Mammary epithelial cell (primary cell): ENCODE measurements at regions of chr15 and their contacts with region 1.

Region 1: GRCh38 chr15:99059010-99059981 is 45.6 kb upstream of the SYNM start:
- DNase-seq: peak; percentile 30
- H3K4me3 ChIP-seq: peak overlapping the region; percentile 41 to 67 (median 64)
- H3K27ac ChIP-seq: peak overlapping the region; percentile 13
- H3K4me1 ChIP-seq: peaks cover 7% of the 10 kb centered on the region
- H3K27me3 ChIP-seq: no peaks in the 10 kb centered on the region
- CTCF ChIP-seq: peak; percentile 54 to 57

Region 2: DNA sequence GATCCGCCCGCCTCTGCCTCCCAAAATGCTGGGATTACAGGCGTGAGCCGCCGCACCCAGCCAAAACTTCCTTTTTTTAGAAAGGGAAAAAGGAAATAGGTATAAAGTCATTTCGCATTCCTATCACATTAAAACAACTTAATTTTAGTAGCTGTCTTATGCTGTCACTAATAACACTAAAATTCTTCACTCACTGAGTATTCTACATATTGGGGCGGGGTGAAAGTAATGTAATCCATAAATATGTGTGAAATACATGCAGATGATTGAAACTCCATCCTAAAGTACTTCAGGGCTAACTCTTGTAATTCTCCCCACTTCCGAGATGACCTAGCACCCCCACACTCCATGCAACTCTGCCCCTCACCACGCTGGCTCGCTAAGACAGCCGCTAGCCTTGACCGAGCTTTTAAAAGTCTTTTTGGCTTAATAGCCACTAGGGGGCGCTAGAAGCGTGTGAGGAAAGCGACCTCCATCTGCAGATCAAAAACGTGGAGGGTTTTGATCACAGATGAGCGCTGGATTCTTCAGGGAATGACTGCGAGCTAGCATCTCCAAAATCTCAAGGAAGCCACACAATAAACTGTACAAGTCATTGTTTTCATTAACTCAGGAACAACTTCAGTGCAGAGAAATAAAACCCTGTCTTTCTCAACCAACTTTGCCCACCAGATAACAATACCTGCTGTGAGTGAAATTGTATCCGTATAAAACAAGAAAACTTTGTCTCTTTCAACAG is 540.3 kb before region 1 on chr15:
- CTCF ChIA-PET with region 1: no interaction called
- dilution Hi-C with region 1: no loop called
- in situ Hi-C with region 1: no loop called
- intact Hi-C with region 1: loop called (anchors 1 kb)
- DNase-seq: peak; percentile 57
- H3K4me3 ChIP-seq: no peak overlapping the region
- H3K27ac ChIP-seq: no peak overlapping the region
- H3K4me1 ChIP-seq: no peaks in the 10 kb centered on the region
- H3K27me3 ChIP-seq: no peaks in the 10 kb centered on the region
- CTCF ChIP-seq: peak; percentile 63 to 83

Region 3: DNA sequence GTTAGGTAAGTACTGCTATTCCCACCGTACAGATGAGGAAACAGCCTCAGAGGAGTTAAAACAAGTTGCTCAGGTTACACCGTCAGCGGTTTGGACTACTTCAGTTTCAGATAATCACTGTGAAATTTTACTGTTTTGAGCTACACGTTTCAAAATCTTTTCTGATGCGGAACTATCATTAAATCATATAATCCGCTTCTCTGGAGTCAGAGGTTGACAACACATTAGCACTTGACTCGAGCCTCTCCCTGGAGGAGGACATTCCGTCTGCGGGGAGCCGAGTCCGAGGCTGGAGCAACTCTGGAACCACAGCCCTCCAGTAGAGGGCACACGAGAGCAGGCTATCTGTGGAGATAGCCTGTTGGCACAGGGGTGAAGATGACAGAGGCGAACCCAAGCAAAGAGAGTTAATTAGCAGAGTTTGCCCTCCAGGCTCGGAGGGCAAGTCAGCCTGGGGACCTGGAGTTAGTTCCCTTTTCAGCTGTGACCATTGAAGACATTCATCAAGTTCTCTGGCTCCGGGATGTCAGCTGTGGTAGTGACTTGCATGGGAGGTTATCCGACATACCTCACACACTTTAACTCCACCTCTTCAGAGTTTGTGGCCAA is 279.7 kb before region 1 on chr15:
- CTCF ChIA-PET with region 1: no interaction called
- dilution Hi-C with region 1: no loop called
- in situ Hi-C with region 1: no loop called
- intact Hi-C with region 1: loop called (anchors 5 kb)
- DNase-seq: peak; percentile 74
- H3K4me3 ChIP-seq: no peak overlapping the region
- H3K27ac ChIP-seq: peak overlapping the region; percentile 10
- H3K4me1 ChIP-seq: peaks cover 34% of the 10 kb centered on the region
- H3K27me3 ChIP-seq: no peaks in the 10 kb centered on the region
- CTCF ChIP-seq: peak; percentile 97

Region 4: GRCh38 chr15:98904544-98904943 is 154.8 kb before region 1 on chr15:
- CTCF ChIA-PET with region 1: no interaction called
- dilution Hi-C with region 1: no loop called
- in situ Hi-C with region 1: loop called in 1 of 2 experiments (anchors 25 kb)
- intact Hi-C with region 1: loop called (anchors 1 kb)
- DNase-seq: peak; percentile 52
- H3K4me3 ChIP-seq: no peak overlapping the region
- H3K27ac ChIP-seq: peak overlapping the region; percentile 94
- H3K4me1 ChIP-seq: peaks cover 69% of the 10 kb centered on the region
- H3K27me3 ChIP-seq: no peaks in the 10 kb centered on the region
- CTCF ChIP-seq: peak; percentile 67 to 84

Region 5: GRCh38 chr15:98943601-98944151 is 115.6 kb before region 1 on chr15:
- CTCF ChIA-PET with region 1: no interaction called
- dilution Hi-C with region 1: no loop called
- in situ Hi-C with region 1: no loop called
- intact Hi-C with region 1: loop called (anchors 10 kb)
- DNase-seq: no peak
- H3K4me3 ChIP-seq: no peak overlapping the region
- H3K27ac ChIP-seq: no peak overlapping the region
- H3K4me1 ChIP-seq: no peaks in the 10 kb centered on the region
- H3K27me3 ChIP-seq: no peaks in the 10 kb centered on the region
- CTCF ChIP-seq: no peak

Region 6: GRCh38 chr15:98994892-98995291 is 64.4 kb before region 1 on chr15:
- CTCF ChIA-PET with region 1: no interaction called
- dilution Hi-C with region 1: no loop called
- in situ Hi-C with region 1: no loop called
- intact Hi-C with region 1: no loop called
- DNase-seq: no peak
- H3K4me3 ChIP-seq: no peak overlapping the region
- H3K27ac ChIP-seq: no peak overlapping the region
- H3K4me1 ChIP-seq: no peaks in the 10 kb centered on the region
- H3K27me3 ChIP-seq: no peaks in the 10 kb centered on the region
- CTCF ChIP-seq: no peak

Region 7: GRCh38 chr15:99090938-99091337 is 31.6 kb after region 1 on chr15:
- CTCF ChIA-PET with region 1: no interaction called
- dilution Hi-C with region 1: no loop called
- in situ Hi-C with region 1: no loop called
- intact Hi-C with region 1: no loop called
- DNase-seq: no peak
- H3K4me3 ChIP-seq: no peak overlapping the region
- H3K27ac ChIP-seq: no peak overlapping the region
- H3K4me1 ChIP-seq: no peaks in the 10 kb centered on the region
- H3K27me3 ChIP-seq: peaks cover 2% of the 10 kb centered on the region
- CTCF ChIP-seq: no peak